ENCODE measurements at regions of chr12 and their contacts with region 1.

Region 1: GRCh38 chr12:47870175-47870781 is 34.5 kb downstream of the VDR start:
- DNase-seq: peak; percentile 24
- H3K4me3 ChIP-seq: no peak overlapping the region
- H3K27ac ChIP-seq: no peak overlapping the region
- H3K4me1 ChIP-seq: peaks cover 17% of the 10 kb centered on the region
- CTCF ChIP-seq: peak; percentile 57

Region 2: DNA sequence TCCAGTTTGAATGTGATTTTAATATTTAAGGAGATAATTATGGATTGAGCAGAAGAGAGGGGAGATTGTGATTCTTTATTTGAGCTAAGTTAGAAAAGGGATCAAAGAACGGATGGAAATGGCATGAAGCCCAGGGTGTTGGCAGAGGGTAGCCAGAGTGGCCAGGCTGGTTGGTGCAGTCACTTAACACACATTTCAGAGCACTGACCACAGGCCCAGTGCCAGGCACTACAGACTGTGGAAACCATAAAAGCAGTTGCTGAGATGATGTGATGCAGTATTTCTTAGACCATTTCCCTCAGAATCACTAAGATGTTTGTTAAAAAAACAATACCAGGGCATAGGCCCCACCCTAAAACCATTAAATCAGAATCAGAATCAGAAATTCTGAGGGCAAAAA is 622.8 kb before region 1 on chr12:
- CTCF ChIA-PET with region 1: no interaction called
- POLR2A ChIA-PET with region 1: interaction called, 11 read pairs
- intact Hi-C with region 1: no loop called
- DNase-seq: no peak
- H3K4me3 ChIP-seq: no peak overlapping the region
- H3K27ac ChIP-seq: no peak overlapping the region
- H3K4me1 ChIP-seq: peaks cover 8% of the 10 kb centered on the region
- CTCF ChIP-seq: no peak

Region 3: DNA sequence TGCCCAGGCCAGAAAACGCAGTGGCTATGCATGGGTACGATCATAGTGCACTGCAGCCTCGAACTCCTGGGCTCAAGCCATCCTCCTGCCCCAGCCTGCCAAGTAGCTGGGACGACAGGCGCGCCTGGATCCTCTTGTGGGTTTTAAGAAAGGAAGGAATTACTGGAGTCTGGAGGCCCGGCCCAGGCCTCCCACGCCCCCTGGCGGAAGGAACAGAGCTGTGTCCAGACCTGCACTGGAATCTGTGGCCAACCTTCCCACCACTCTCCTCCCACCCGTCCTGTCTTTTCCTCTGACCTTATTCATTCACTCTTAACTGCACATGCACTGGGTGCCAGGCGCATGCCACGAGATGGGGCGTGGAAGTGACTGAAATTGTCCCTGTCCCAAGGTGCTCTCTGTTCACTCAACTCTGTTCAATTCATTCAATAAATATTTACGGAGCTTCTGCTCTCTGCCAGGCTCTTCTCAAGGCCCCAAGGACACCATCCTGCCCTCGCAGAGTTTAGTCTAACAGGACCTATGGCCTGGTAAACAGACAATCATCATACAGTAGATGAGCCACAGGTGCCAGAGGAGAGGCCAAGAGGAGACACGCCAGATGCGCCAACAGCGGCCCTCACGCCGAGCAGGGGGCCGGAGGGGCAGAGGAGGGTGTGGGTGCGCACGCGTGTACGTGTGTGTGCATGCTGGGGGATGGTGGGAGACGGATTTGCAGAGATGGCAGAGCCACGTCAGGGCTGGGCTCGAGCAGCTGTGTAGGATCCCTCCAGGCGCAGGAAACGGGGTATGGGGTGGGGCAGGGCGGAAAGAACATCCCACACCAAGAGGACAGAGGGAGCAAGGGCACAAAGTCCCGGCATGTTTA is 79.4 kb after region 1 on chr12:
- CTCF ChIA-PET with region 1: interaction called, 3 read pairs
- POLR2A ChIA-PET with region 1: no interaction called
- intact Hi-C with region 1: loop called (anchors 1 kb)
- DNase-seq: peak; percentile 66
- H3K4me3 ChIP-seq: no peak overlapping the region
- H3K27ac ChIP-seq: no peak overlapping the region
- H3K4me1 ChIP-seq: no peaks in the 10 kb centered on the region
- CTCF ChIP-seq: peak; percentile 95